ENCODE measurements at regions of chr17 and their contacts with region 1.

Region 1: DNA sequence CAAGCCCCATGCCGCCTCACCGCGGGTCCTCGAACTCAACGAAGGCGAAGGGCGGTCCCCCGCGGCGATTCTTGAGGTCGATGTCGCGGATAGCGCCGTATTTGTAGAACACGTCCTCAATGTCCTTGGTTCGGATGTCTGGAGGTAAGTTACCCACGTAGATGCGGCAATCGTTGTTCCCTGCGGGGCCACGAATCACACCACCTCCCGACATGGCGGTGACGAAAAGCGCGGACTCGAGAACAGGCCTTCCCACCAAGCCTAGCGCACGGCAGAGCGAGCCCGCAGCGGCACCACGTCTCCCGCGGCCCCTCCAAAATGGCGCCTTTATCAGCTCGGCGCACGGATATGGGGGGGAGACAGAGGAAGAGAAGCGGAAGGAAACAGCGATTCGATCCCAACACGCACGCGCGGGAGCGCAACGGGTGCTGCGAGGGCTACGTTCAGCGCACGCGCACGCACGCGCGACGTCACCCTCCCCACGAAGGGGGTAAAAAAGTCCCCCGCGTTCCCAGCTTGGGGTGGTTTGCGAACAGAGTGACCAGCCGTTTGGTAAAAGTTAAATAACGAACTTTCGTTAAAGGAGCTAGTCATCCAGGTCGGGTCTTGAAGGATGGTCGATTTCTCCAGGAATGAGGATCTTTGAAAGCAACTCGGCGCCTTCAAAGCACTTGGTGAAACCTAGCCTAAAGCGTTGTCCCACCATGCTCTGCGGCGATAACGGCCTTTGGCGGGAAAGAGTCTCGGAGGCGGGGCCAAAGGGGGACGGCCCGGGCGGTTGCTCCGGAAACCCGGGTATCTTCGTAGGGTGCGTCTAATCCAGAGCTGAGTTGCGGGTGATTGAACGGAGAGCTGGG is at the start of gene SRSF1:
- DNase-seq: peak; percentile 98 to 99
- ATAC-seq: peak; percentile 93 to 95 (median 94)
- H3K4me3 ChIP-seq: peak within 1 kb of the TSS; percentile 98
- H3K27ac ChIP-seq: peak within 1 kb of the TSS; percentile 97
- H3K4me1 ChIP-seq: peaks cover 45% of the 10 kb centered on the region
- H3K27me3 ChIP-seq: no peaks in the 10 kb centered on the region
- CTCF ChIP-seq: no peak
- total RNA-seq, gene SRSF1: 71.2 to 141 (median 100) TPM

Region 2: DNA sequence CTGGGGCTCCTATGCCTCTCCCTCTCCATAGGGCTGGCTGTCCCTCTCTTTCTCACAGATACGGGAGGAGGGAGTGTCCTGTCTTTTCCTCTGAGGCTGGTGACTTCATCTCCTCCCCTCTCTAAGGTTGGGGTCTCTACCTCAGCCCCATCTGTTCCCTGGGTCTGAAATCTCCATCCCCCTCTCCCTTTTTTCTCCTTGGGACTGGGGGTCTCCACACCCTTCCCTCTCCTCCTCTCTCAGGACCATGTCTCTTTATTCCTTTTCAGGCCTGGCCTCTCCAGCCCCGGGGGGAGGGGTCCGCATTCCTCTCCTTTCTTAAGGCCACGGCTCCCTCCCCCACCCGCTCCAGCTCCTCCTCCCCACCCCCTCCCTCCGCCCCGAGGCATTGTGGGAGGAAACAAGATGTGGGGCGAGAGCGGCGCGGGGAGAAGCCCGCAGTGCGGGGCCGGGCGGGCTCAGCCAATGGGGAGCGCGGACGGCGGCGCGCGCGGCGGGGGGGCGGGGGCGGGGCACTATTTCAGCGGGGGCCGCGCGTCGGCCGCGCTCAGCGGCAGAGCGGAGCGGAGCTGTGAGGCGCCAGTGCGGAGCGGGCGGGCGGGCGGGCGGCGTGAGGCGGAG is 75.8 kb after region 1 on chr17 and contains the start of gene DYNLL2:
- intact Hi-C with region 1: loop called (anchors 5 kb)
- DNase-seq: peak; percentile 96 to 97
- ATAC-seq: peak; percentile 92 to 94 (median 93)
- H3K4me3 ChIP-seq: peak within 1 kb of the TSS; percentile 97
- H3K27ac ChIP-seq: peak within 1 kb of the TSS; percentile 94
- H3K4me1 ChIP-seq: peaks cover 28% of the 10 kb centered on the region
- H3K27me3 ChIP-seq: peaks cover 0 to 2% (median 0%) of the 10 kb centered on the region in 3 donors
- CTCF ChIP-seq: no peak
- total RNA-seq, gene DYNLL2: 45.5 to 51.1 (median 47.2) TPM

Region 3: DNA sequence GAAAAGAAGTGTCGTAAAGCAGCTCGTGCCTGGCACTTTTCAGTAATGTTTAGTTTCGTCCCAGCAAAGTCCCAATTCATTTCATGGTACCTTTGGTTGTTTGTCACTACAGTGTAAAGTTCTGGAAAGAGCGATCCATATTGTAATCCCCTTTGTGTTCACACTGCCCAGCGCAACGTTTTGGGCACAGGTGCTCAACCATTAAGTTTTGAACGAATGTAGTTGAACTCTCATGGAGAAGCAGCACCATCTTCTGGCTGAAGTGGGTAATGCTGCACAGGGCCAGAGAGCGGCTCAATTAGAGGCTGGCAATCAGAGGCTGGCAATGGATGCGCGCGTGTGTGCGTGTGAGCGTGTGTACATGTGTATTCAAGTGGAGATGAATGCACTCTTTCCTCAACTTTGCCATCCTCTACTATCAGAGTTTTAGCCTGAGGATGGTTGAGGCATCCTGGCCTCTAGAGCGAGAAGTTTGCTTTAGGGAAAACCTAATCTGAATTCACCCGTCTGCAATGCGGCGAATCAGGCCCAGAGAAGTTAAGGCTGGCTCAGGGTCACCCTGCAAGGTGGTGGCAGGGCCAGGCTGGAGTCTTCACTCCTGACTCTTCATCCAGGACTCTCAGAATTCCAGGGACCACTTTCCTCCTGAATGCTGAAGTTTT is 105.9 kb after region 1 on chr17:
- intact Hi-C with region 1: loop called (anchors 5 kb)
- DNase-seq: peak; percentile 68 to 84
- ATAC-seq: peak; percentile 88 to 97 (median 92)
- H3K4me3 ChIP-seq: no peak overlapping the region
- H3K27ac ChIP-seq: no peak overlapping the region
- H3K4me1 ChIP-seq: no peaks in the 10 kb centered on the region
- H3K27me3 ChIP-seq: peaks cover 0 to 4% (median 0%) of the 10 kb centered on the region in 3 donors
- CTCF ChIP-seq: peak; percentile 94

Region 4: DNA sequence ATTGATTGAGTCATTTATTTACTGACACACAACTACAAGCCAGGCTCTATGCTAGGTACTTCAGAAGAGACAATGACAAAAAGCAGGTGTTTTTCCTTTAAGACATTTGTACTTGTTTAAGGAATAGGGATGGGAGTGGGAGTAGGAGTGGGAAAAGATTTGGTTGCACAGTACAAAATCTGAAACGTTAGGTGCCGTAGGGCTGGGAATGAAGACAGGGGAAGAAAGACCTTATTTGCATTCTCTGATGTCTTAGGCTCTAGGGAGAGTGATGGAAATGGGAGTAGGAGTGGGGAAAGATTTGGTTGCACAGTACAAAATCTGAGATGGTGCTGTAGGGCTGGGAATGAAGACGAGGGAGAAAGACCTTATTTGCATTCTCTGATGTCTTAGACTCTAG is 112.3 kb after region 1 on chr17:
- intact Hi-C with region 1: loop called (anchors 5 kb)
- DNase-seq: no peak
- ATAC-seq: no peak
- H3K4me3 ChIP-seq: no peak overlapping the region
- H3K27ac ChIP-seq: no peak overlapping the region
- H3K4me1 ChIP-seq: no peaks in the 10 kb centered on the region
- H3K27me3 ChIP-seq: peaks cover 0 to 4% (median 0%) of the 10 kb centered on the region in 3 donors
- CTCF ChIP-seq: no peak

Measured in psoas muscle (tissue), 8 donors.